Ovary (tissue), 10 donors: ENCODE measurements at regions of chr10 and their contacts with region 1.

Region 1: GRCh38 chr10:96743988-96744585 is 23.8 kb upstream of the PIK3AP1 start:
- DNase-seq: peak in 3 of 5 donors; percentile 12 to 42 (median 31)
- H3K4me3 ChIP-seq: no peak overlapping the region
- H3K27ac ChIP-seq: no peak overlapping the region
- H3K4me1 ChIP-seq: no peaks in the 10 kb centered on the region
- H3K27me3 ChIP-seq: no peaks in the 10 kb centered on the region
- CTCF ChIP-seq: peak in 2 of 3 donors; percentile 38 to 44
- EP300 ChIP-seq: no peak
- POLR2A ChIP-seq: no peak

Region 2: GRCh38 chr10:96632974-96633710 is 110.9 kb before region 1 on chr10:
- intact Hi-C with region 1: loop called in 1 of 4 experiments (anchors 5 kb)
- DNase-seq: no peak
- H3K4me3 ChIP-seq: no peak overlapping the region
- H3K27ac ChIP-seq: no peak overlapping the region
- H3K4me1 ChIP-seq: peaks cover 7% of the 10 kb centered on the region
- H3K27me3 ChIP-seq: no peaks in the 10 kb centered on the region
- CTCF ChIP-seq: no peak
- EP300 ChIP-seq: no peak
- POLR2A ChIP-seq: no peak

Region 3: GRCh38 chr10:96814264-96814663 is 70.2 kb after region 1 on chr10:
- intact Hi-C with region 1: loop called in 1 of 4 experiments (anchors 2 kb)
- DNase-seq: no peak
- H3K4me3 ChIP-seq: no peak overlapping the region
- H3K27ac ChIP-seq: no peak overlapping the region
- H3K4me1 ChIP-seq: no peaks in the 10 kb centered on the region
- H3K27me3 ChIP-seq: no peaks in the 10 kb centered on the region
- CTCF ChIP-seq: no peak
- EP300 ChIP-seq: no peak
- POLR2A ChIP-seq: no peak

Region 4: GRCh38 chr10:97596101-97597062 is 852.3 kb after region 1 on chr10:
- intact Hi-C with region 1: no loop called
- DNase-seq: peak in 2 of 5 donors; percentile 32 to 58
- H3K4me3 ChIP-seq: no peak overlapping the region
- H3K27ac ChIP-seq: no peak overlapping the region
- H3K4me1 ChIP-seq: peaks cover 2% of the 10 kb centered on the region
- H3K27me3 ChIP-seq: no peaks in the 10 kb centered on the region
- CTCF ChIP-seq: no peak
- EP300 ChIP-seq: peak; percentile 72
- POLR2A ChIP-seq: no peak

Region 5: GRCh38 chr10:98160026-98160425 is 1415.9 kb after region 1 on chr10:
- intact Hi-C with region 1: no loop called
- DNase-seq: no peak
- H3K4me3 ChIP-seq: no peak overlapping the region
- H3K27ac ChIP-seq: no peak overlapping the region
- H3K4me1 ChIP-seq: peaks cover 3% of the 10 kb centered on the region
- H3K27me3 ChIP-seq: no peaks in the 10 kb centered on the region
- CTCF ChIP-seq: no peak
- EP300 ChIP-seq: no peak
- POLR2A ChIP-seq: no peak